ENCODE measurements at regions of chr5 and their contacts with region 1.

Region 1: GRCh38 chr5:108822211-108822947 is 74.7 kb downstream of the FER start:
- DNase-seq: no peak
- H3K4me3 ChIP-seq: no peak overlapping the region
- H3K27ac ChIP-seq: no peak overlapping the region
- H3K4me1 ChIP-seq: peaks cover 0 to 1% (median 0%) of the 10 kb centered on the region in 4 donors
- H3K27me3 ChIP-seq: no peaks in the 10 kb centered on the region
- CTCF ChIP-seq: no peak
- EP300 ChIP-seq: no peak
- POLR2A ChIP-seq: no peak

Region 2: DNA sequence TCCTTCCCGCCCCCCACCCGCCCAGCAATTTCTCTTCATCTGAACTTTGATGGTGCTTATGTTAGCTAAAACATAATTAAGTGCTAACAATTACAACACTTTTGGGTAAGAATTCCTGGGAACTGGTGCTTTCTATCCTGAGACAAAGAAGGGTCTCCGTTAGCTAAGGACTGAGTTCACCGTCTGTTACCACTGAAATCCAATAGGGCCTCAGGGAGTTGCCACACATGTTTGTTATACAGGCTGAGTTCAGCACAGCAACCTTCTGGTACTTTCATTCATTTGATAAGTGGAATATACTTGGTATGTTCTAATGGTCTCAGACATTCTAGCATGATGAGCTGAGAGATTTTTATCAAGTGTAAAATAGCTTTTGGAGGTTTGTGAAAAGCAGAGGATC is 1589.6 kb before region 1 on chr5:
- in situ Hi-C with region 1: no loop called
- intact Hi-C with region 1: no loop called
- DNase-seq: no peak
- H3K4me3 ChIP-seq: no peak overlapping the region
- H3K27ac ChIP-seq: no peak overlapping the region
- H3K4me1 ChIP-seq: no peaks in the 10 kb centered on the region
- H3K27me3 ChIP-seq: no peaks in the 10 kb centered on the region
- CTCF ChIP-seq: no peak
- EP300 ChIP-seq: no peak
- POLR2A ChIP-seq: no peak

Region 3: DNA sequence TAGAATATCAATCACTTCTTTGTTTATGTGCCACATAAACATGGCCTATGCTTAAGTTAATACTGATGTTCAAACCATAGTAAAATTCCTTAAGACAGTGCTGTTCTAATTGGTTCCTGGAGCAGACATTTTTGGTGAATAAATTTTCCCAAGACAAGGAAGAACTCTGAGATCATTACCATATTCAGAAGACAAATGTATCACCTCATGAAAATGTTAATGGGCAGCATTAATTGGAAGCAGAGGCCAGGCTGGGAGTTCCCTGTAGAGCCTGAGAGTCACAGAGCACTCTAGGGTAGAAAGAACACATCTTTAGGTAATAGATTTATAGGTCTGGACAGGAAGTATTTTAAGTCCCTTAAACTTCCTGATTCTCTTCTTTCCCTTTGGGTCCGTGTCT is 1107.5 kb after region 1 on chr5:
- in situ Hi-C with region 1: no loop called
- intact Hi-C with region 1: loop called (anchors 5 kb)
- DNase-seq: no peak
- H3K4me3 ChIP-seq: no peak overlapping the region
- H3K27ac ChIP-seq: no peak overlapping the region
- H3K4me1 ChIP-seq: no peaks in the 10 kb centered on the region
- H3K27me3 ChIP-seq: no peaks in the 10 kb centered on the region
- CTCF ChIP-seq: no peak
- EP300 ChIP-seq: no peak
- POLR2A ChIP-seq: no peak